ENCODE measurements at regions of chr5 and their contacts with region 1.

Region 1: DNA sequence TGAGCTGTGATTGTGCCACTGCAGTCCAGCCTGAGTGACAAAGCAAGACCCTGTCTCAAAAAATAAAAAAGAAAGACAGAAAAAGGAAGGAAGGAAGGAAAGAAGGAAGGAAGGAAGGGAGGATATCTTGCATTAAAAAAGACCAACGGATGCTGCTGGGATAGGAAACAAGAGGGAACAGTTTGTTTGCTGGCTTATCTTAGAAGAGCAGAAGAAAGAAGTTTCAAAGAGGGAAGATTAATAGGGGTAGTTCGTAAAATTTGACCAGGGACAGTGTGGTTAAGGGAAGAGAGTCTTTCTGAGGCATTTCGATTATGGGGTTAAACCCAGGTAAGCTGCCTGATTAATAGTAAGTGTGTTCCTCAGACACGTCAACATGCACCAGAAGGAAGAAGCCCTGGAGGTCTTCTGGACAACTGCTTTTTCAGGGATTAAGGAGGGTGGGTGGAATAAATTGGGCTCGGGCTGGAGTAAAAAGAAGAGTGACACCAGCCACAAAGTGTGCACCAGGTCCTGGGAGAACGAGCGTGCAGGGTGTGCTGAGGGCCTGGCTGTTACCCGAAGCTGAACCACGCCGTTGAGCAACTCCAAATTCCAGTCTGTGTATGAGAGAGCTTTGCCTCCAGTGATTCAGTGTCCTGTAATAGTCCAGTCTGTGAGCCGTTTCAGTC is 24.8 kb downstream of the FYB1 start:
- DNase-seq: no peak
- H3K4me3 Mint-ChIP-seq: peak overlapping the region; percentile 76
- H3K27ac Mint-ChIP-seq: peak overlapping the region; percentile 79
- H3K4me1 Mint-ChIP-seq: peaks cover 77% of the 10 kb centered on the region
- H3K27me3 Mint-ChIP-seq: no peaks in the 10 kb centered on the region

Region 2: GRCh38 chr5:39158127-39158593 is 36.4 kb before region 1 on chr5:
- CTCF ChIA-PET with region 1: interaction called, 4 read pairs
- POLR2A ChIA-PET with region 1: interaction called, 78 read pairs
- DNase-seq: no peak
- H3K4me3 Mint-ChIP-seq: peak overlapping the region; percentile 37
- H3K27ac Mint-ChIP-seq: peak overlapping the region; percentile 38
- H3K4me1 Mint-ChIP-seq: peaks cover 81% of the 10 kb centered on the region
- H3K27me3 Mint-ChIP-seq: no peaks in the 10 kb centered on the region

Region 3: GRCh38 chr5:39164529-39165402 is 29.8 kb before region 1 on chr5:
- CTCF ChIA-PET with region 1: interaction called, 10 read pairs
- POLR2A ChIA-PET with region 1: interaction called, 78 read pairs
- DNase-seq: no peak
- H3K4me3 Mint-ChIP-seq: peak overlapping the region; percentile 60
- H3K27ac Mint-ChIP-seq: peak overlapping the region; percentile 79
- H3K4me1 Mint-ChIP-seq: peaks cover 85% of the 10 kb centered on the region
- H3K27me3 Mint-ChIP-seq: no peaks in the 10 kb centered on the region